Right ventricle myocardium superior (tissue), 1 donor: ENCODE measurements at regions of chr7 and their contacts with region 1.

Region 1: DNA sequence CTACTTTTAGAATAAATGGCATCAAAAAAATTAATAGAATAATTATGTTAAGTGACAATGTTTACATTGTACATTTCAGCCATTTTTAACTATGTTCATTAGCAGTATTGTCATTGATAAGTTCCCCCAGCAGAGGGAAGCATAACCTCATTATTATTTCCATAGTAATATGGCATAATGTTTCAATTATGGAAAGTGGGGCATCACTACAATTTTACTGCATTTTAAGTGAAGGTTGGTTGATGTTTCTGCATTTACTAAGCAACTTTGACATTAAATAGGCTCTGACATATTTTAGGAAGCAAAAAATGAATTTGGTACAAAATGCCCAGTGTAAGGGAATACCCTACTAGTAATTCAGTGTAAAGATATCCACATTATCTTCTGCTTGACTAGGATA is 218.3 kb downstream of the SEMA3A start:
- DNase-seq: no peak
- ATAC-seq: peak; percentile 71

Region 2: GRCh38 chr7:83599131-83599530 is 377.2 kb before region 1 on chr7:
- intact Hi-C with region 1: no loop called
- DNase-seq: no peak
- ATAC-seq: no peak

Region 3: GRCh38 chr7:84021292-84021908 is 45.1 kb after region 1 on chr7:
- intact Hi-C with region 1: no loop called
- DNase-seq: no peak
- ATAC-seq: peak; percentile 83

Region 4: GRCh38 chr7:84455788-84456187 is 479.5 kb after region 1 on chr7:
- intact Hi-C with region 1: loop called (anchors 10 kb)
- DNase-seq: no peak
- ATAC-seq: no peak